Motor neuron (in vitro differentiated cells): ENCODE measurements at regions of chr22 and their contacts with region 1.

Region 1: GRCh38 chr22:33302049-33302545 is 243.9 kb upstream of the SYN3 start:
- ATAC-seq: peak; percentile 88 to 98 (median 95)
- H3K4me3 ChIP-seq: no peak overlapping the region
- H3K27ac ChIP-seq: no peak overlapping the region
- H3K4me1 ChIP-seq: no peaks in the 10 kb centered on the region

Region 2: DNA sequence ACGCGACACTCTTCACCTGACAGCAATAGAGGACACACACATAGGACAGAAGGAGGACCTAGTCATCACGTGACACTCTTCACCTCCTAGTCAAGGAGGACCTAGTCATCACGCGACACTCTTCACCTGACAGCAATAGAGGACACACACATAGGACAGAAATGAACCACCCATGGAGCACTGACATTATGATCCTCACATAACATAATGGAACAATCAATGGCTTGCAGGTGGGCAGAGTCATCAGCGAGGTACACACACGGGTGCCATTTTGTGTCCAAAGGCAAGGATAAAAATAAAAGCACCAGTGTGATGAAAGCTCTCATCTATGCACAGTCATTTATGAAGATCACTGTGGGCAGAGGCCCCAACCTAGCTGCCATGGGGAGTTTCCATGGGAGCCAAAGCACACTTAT is 263.5 kb after region 1 on chr22:
- in situ Hi-C with region 1: loop called in 1 of 9 experiments (anchors 25 kb)
- ATAC-seq: no peak
- H3K4me3 ChIP-seq: no peak overlapping the region
- H3K27ac ChIP-seq: no peak overlapping the region
- H3K4me1 ChIP-seq: peaks cover 23 to 39% of the 10 kb centered on the region in 2 donors

Region 3: GRCh38 chr22:33932997-33933396 is 630.9 kb after region 1 on chr22:
- in situ Hi-C with region 1: loop called in 1 of 9 experiments (anchors 25 kb)
- ATAC-seq: peak in 2 of 8 experiments; percentile 20 to 75
- H3K4me3 ChIP-seq: no peak overlapping the region
- H3K27ac ChIP-seq: no peak overlapping the region
- H3K4me1 ChIP-seq: no peaks in the 10 kb centered on the region

Region 4: GRCh38 chr22:34111210-34111824 is 809.2 kb after region 1 on chr22:
- in situ Hi-C with region 1: loop called in 2 of 9 experiments (anchors 25 kb)
- ATAC-seq: peak in 7 of 8 experiments; percentile 34 to 80 (median 48)
- H3K4me3 ChIP-seq: no peak overlapping the region
- H3K27ac ChIP-seq: no peak overlapping the region
- H3K4me1 ChIP-seq: peaks cover 0 to 3% of the 10 kb centered on the region in 2 donors

Region 5: DNA sequence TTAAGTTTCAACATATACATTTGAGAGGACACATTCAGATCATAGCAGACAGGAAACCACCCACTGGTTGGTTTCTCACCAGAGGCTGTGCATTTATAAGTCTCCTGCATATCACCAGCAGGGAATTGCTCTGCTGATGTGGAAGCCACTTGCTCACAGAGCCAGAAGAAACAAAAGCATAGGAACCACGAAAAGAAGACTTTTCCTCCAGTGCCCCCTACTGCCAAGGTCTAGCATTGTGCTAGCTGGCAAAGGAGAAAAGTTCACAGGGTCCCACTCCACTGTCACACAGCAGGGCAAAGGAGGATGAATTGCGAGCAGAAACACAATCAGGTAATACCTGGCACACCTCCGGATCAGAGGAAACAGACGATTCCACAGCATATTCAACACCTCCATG is 1735.0 kb after region 1 on chr22:
- in situ Hi-C with region 1: loop called in 1 of 9 experiments (anchors 25 kb)
- ATAC-seq: no peak
- H3K4me3 ChIP-seq: no peak overlapping the region
- H3K27ac ChIP-seq: no peak overlapping the region
- H3K4me1 ChIP-seq: no peaks in the 10 kb centered on the region